ENCODE measurements at regions of chr12 and their contacts with region 1.

Region 1: GRCh38 chr12:97813301-97813700 is 350.7 kb downstream of the RMST start:
- DNase-seq: peak; percentile 6
- H3K4me3 ChIP-seq: no peak overlapping the region
- H3K27ac ChIP-seq: no peak overlapping the region
- H3K4me1 ChIP-seq: no peaks in the 10 kb centered on the region
- H3K27me3 ChIP-seq: no peaks in the 10 kb centered on the region
- CTCF ChIP-seq: no peak

Region 2: DNA sequence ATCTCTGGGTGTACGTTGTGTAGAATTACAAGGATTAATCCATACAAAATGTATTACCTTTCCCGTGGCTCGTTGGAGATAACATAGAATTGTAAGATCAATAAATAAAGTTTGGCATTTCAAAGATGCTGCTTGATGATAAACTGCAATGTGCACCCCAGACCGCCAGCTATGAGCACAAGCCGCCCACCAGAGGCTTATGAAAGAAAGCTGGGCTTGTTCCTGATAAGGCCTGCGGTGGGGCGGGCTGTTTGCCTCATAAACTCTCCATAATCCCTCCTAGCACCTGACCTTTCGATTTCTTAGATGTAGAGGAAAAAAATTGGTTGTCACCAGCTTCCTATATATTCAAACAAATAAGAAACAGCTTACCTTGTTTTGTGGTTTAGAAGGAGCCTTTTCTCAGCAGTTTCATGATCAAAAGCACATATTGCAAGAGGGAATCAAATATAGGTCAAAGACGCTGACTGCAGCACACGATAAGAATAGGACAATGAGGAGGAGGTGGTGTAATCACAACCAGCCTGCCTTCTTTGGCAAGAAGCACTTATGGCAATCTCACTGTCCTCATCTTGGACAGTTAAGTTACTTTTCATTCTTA is 57.1 kb before region 1 on chr12:
- CTCF ChIA-PET with region 1: no interaction called
- dilution Hi-C with region 1: no loop called
- in situ Hi-C with region 1: no loop called
- intact Hi-C with region 1: no loop called
- DNase-seq: no peak
- H3K4me3 ChIP-seq: no peak overlapping the region
- H3K27ac ChIP-seq: no peak overlapping the region
- H3K4me1 ChIP-seq: peaks cover 6% of the 10 kb centered on the region
- H3K27me3 ChIP-seq: no peaks in the 10 kb centered on the region
- CTCF ChIP-seq: no peak

Region 3: DNA sequence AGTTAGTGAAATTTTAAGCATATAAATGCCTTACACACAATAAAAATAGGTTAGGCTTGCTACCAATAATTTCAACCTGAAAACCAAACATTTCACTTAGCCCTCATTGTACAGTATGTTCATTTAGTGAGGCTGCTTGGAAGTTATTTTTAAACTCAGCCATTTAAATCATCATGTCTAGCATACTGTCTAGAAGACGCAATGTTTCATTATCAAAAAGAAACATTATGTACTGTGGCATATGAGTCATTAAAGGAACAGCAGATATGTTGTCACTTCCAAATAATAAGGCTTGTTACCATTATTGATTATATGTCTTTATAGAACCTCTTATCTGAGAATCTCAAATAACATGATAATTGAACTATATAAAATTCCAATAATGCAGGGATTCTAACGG is 46.0 kb before region 1 on chr12:
- CTCF ChIA-PET with region 1: no interaction called
- dilution Hi-C with region 1: no loop called
- in situ Hi-C with region 1: no loop called
- intact Hi-C with region 1: loop called (anchors 5 kb)
- DNase-seq: no peak
- H3K4me3 ChIP-seq: no peak overlapping the region
- H3K27ac ChIP-seq: no peak overlapping the region
- H3K4me1 ChIP-seq: no peaks in the 10 kb centered on the region
- H3K27me3 ChIP-seq: no peaks in the 10 kb centered on the region
- CTCF ChIP-seq: no peak

Region 4: GRCh38 chr12:97907504-97907903 is 94.2 kb after region 1 on chr12:
- CTCF ChIA-PET with region 1: no interaction called
- dilution Hi-C with region 1: no loop called
- in situ Hi-C with region 1: no loop called
- intact Hi-C with region 1: no loop called
- DNase-seq: no peak
- H3K4me3 ChIP-seq: no peak overlapping the region
- H3K27ac ChIP-seq: no peak overlapping the region
- H3K4me1 ChIP-seq: no peaks in the 10 kb centered on the region
- H3K27me3 ChIP-seq: no peaks in the 10 kb centered on the region
- CTCF ChIP-seq: no peak

Measured in mammary epithelial cell (primary cell).